Thyroid gland (tissue), 4 donors: ENCODE measurements at regions of chr10 and their contacts with region 1.

Region 1: DNA sequence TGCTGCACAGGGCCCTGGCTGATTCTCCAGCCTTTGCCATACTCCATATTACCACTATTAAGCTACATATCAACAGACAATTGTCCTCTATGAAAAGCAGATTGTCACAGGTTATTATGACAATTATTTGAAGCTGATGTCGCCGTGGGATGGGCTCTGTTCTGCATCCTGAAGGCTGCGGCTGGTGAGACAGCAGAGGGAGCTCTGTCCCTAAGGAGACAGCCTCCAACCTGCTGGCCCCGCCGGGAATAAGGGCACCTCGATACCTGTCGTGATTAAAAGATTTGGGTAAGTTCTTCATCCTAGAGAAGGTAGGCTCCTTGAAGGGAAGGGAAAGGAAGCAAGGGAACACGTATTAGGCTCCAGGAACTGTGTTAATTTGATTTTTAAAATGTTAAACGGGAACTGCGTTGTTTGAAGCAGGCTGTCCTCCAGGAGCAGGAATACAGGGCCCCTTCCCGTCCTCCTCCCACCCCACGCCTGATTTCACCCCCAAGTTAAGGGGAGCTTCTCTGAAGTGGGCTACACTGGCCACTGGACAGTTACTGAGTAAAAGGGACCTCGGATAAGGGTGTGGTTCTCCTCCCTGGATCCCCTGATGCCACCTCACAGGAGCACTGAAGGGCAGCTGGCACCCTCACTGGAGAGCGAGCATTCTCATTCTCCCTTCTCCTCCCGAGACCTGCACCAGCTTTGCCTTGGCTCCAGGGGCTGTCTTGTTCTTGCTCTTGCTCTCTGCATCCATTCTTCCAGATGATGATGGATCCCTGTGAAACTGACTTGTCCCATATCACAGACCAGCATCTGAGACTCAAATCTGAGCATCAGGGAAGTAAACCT is 11.8 kb upstream of the TIAL1 start:
- DNase-seq: peak; percentile 66 to 71
- H3K4me3 ChIP-seq: no peak overlapping the region
- H3K27ac ChIP-seq: no peak overlapping the region
- H3K4me1 ChIP-seq: no peaks in the 10 kb centered on the region
- H3K27me3 ChIP-seq: no peaks in the 10 kb centered on the region
- CTCF ChIP-seq: peak in 5 of 6 experiments; percentile 37 to 78 (median 64)
- POLR2A ChIP-seq: no peak

Region 2: GRCh38 chr10:119686439-119687191 is 78.1 kb after region 1 on chr10:
- intact Hi-C with region 1: loop called (anchors 10 kb)
- DNase-seq: peak; percentile 63 to 82
- H3K4me3 ChIP-seq: no peak overlapping the region
- H3K27ac ChIP-seq: peak overlapping the region in 1 of 3 donors; percentile 31
- H3K4me1 ChIP-seq: peaks cover 0 to 10% of the 10 kb centered on the region in 2 donors
- H3K27me3 ChIP-seq: no peaks in the 10 kb centered on the region
- CTCF ChIP-seq: peak; percentile 74 to 96 (median 89)
- POLR2A ChIP-seq: no peak

Region 3: GRCh38 chr10:119859420-119860258 is 251.1 kb after region 1 on chr10:
- intact Hi-C with region 1: loop called (anchors 10 kb)
- DNase-seq: no peak
- H3K4me3 ChIP-seq: no peak overlapping the region
- H3K27ac ChIP-seq: no peak overlapping the region
- H3K4me1 ChIP-seq: peaks cover 0 to 6% of the 10 kb centered on the region in 2 donors
- H3K27me3 ChIP-seq: no peaks in the 10 kb centered on the region
- CTCF ChIP-seq: peak; percentile 15 to 73 (median 56)
- POLR2A ChIP-seq: no peak

Region 4: GRCh38 chr10:120011359-120012130 is 403.0 kb after region 1 on chr10:
- intact Hi-C with region 1: no loop called
- DNase-seq: peak; percentile 3 to 18
- H3K4me3 ChIP-seq: no peak overlapping the region
- H3K27ac ChIP-seq: no peak overlapping the region
- H3K4me1 ChIP-seq: no peaks in the 10 kb centered on the region
- H3K27me3 ChIP-seq: no peaks in the 10 kb centered on the region
- CTCF ChIP-seq: peak in 2 of 6 experiments; percentile 9 to 19
- POLR2A ChIP-seq: no peak